ENCODE measurements at regions of chr9 and their contacts with region 1.

Region 1: GRCh38 chr9:104927912-104928740 is at the start of gene ABCA1:
- DNase-seq: peak; percentile 99
- H3K4me3 ChIP-seq: peak within 1 kb of the TSS; percentile 87 to 93 (median 90)
- H3K27ac ChIP-seq: peak within 1 kb of the TSS; percentile 91 to 94 (median 94)
- H3K4me1 ChIP-seq: peaks cover 27 to 39% (median 39%) of the 10 kb centered on the region in 4 donors
- H3K27me3 ChIP-seq: no peaks in the 10 kb centered on the region
- CTCF ChIP-seq: no peak
- EP300 ChIP-seq: no peak
- POLR2A ChIP-seq: peak; percentile 81
- total RNA-seq, gene ABCA1: 47.8 to 73.9 (median 54.7) TPM

Region 2: DNA sequence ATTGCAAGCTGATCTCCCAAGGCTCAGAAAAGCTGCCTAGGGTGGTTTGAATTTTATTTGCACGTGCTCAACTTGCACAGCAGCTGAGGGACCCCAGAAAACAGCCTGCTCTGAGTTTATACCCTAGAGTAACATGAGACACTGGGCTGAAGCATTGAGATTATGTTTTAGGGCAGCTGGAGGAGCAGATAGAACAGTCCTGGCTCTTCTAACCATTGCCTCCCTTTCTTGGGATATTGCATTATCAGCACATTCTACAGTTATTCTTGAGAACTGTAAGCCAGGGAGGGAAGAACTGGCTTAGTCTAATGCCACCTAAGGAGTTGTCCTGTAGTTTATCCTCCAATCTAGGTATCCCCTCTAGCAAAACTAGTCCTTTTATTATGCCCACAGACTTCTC is 823.8 kb before region 1 on chr9:
- intact Hi-C with region 1: no loop called
- DNase-seq: no peak
- H3K4me3 ChIP-seq: no peak overlapping the region
- H3K27ac ChIP-seq: no peak overlapping the region
- H3K4me1 ChIP-seq: no peaks in the 10 kb centered on the region
- H3K27me3 ChIP-seq: no peaks in the 10 kb centered on the region
- CTCF ChIP-seq: no peak
- EP300 ChIP-seq: no peak
- POLR2A ChIP-seq: no peak

Region 3: GRCh38 chr9:104743376-104743985 is 184.6 kb before region 1 on chr9:
- intact Hi-C with region 1: no loop called
- DNase-seq: no peak
- H3K4me3 ChIP-seq: no peak overlapping the region
- H3K27ac ChIP-seq: no peak overlapping the region
- H3K4me1 ChIP-seq: peaks cover 1 to 12% (median 7%) of the 10 kb centered on the region in 4 donors
- H3K27me3 ChIP-seq: no peaks in the 10 kb centered on the region
- CTCF ChIP-seq: peak; percentile 60 to 70 (median 67)
- EP300 ChIP-seq: no peak
- POLR2A ChIP-seq: no peak

Region 4: DNA sequence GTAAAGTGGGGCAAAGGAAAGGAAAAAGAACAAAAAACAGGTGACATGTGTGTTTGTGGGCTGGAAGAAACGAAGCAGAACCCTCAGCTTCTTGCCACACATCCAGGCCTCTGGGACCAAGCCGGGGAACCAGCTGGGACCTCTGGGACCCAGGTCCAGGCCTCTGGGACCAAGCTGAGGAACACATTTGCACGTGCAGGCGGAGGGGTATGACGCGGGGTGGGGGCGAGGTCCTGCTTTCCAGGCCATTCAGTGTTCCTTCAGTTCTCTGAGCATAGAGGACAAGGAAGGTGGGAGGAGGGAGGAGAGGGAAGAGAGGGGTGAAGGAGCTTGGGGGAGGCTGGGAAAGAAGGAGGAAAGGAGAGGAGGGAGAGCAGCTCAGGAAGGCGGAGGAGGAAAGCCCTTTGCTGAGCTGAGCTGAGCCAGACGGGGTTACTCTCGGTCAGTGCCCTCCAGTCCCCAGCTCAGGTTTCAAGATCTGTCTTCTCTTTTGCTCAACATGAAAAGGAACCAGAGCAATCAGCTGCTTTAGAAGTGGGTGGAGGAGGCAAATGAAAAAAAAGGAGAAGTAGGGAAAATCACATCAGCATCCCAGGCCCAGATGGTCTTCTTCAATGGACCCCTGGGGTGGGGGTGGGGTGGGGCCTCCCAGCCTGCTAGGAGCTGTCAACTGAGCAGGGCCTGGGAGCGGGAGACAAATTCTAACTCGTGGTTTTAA is 59.3 kb before region 1 on chr9:
- intact Hi-C with region 1: loop called (anchors 5 kb)
- DNase-seq: no peak
- H3K4me3 ChIP-seq: no peak overlapping the region
- H3K27ac ChIP-seq: peak overlapping the region; percentile 53 to 80 (median 64)
- H3K4me1 ChIP-seq: peaks cover 46 to 90% (median 71%) of the 10 kb centered on the region in 4 donors
- H3K27me3 ChIP-seq: no peaks in the 10 kb centered on the region
- CTCF ChIP-seq: no peak
- EP300 ChIP-seq: no peak
- POLR2A ChIP-seq: no peak

Region 5: DNA sequence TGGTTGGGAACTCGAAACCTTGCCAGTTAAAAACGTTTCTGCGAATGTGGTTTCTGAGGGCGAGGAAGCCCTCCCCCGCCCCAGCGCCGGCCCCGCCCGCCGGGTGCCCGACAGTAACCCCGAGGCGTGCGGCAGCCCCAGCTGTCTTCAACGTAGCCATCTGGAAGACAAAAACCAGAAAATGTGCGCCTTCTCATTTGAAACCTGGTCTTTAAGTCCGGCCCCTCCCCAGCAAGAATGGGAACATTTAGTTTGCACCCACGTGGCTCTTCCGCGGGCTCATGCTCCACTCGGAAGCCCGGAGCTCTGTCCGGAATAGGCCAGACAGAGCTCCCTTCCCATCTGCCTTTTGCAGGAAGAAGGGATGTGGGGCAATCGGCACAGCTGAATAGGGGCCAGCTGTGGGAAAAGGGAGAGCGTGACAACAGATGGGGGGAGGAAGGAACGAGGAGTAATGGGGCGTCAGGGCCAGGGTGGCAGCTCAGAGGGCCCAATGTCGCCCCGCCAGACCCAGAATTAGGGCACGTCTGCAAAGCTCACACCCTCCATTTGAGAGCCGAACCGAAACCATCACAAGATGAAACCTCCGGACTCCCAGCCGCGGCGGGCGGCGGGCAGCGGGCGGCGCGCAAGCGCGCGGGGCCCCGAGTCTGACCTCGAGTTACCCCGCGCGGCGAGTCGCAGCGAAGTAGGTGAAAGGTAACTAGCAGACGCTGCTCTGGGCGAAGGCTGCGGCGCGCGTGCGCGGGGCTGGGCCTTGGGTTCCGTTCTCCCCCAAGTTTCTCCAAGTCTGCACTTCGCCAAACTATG is 63.2 kb after region 1 on chr9:
- intact Hi-C with region 1: loop called (anchors 2 kb)
- DNase-seq: peak; percentile 97
- H3K4me3 ChIP-seq: peak overlapping the region; percentile 63 to 81 (median 74)
- H3K27ac ChIP-seq: peak overlapping the region; percentile 93 to 98 (median 96)
- H3K4me1 ChIP-seq: peaks cover 37 to 48% (median 46%) of the 10 kb centered on the region in 4 donors
- H3K27me3 ChIP-seq: no peaks in the 10 kb centered on the region
- CTCF ChIP-seq: no peak
- EP300 ChIP-seq: peak; percentile 26
- POLR2A ChIP-seq: peak; percentile 19

Region 6: GRCh38 chr9:105157130-105157583 is 229.0 kb after region 1 on chr9:
- intact Hi-C with region 1: loop called (anchors 2 kb)
- DNase-seq: no peak
- H3K4me3 ChIP-seq: no peak overlapping the region
- H3K27ac ChIP-seq: peak overlapping the region; percentile 37 to 59 (median 48)
- H3K4me1 ChIP-seq: peaks cover 0 to 26% (median 15%) of the 10 kb centered on the region in 4 donors
- H3K27me3 ChIP-seq: no peaks in the 10 kb centered on the region
- CTCF ChIP-seq: peak; percentile 58 to 68 (median 60)
- EP300 ChIP-seq: no peak
- POLR2A ChIP-seq: no peak

Region 7: GRCh38 chr9:105414947-105415661 is 487.0 kb after region 1 on chr9:
- intact Hi-C with region 1: loop called (anchors 2 kb)
- DNase-seq: no peak
- H3K4me3 ChIP-seq: no peak overlapping the region
- H3K27ac ChIP-seq: no peak overlapping the region
- H3K4me1 ChIP-seq: peaks cover 3 to 9% (median 6%) of the 10 kb centered on the region in 4 donors
- H3K27me3 ChIP-seq: no peaks in the 10 kb centered on the region
- CTCF ChIP-seq: peak; percentile 77 to 84 (median 79)
- EP300 ChIP-seq: no peak
- POLR2A ChIP-seq: no peak